Endothelial cell of umbilical vein (primary cell): ENCODE measurements at regions of chr3 and their contacts with region 1.

Region 1: DNA sequence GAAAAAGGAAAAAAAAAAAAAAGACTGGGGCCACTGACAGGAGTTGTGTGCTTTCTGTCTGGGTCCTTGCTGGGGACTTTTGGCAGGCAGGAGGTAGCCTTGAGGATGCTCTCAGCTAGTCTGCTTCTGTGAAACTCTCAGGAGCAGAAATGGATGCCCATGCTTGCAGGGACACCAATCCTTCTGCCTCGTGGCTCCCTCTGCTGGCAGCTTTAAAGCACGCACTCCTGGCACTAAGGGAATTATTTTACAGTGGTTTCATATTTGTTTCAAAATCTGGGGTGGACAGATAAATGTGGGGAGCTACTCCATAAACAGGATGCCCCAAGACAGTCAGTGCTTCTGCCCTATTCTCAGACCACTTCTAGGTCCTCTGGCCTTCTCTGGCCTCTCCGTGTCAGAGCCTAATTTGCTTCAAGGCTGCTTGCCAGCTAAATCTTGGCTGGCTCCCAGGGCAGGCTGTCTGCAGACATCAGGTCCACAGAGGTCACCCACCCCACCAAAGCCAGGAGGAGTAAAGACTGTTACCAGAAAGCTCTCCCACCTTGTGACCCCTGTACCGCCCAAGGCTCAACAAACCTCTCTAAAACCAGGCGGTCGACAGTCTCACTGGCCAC is 17.1 kb downstream of the TRAIP start:
- DNase-seq: peak; percentile 82
- H3K4me3 ChIP-seq: no peak overlapping the region
- H3K27ac ChIP-seq: no peak overlapping the region
- H3K4me1 ChIP-seq: peaks cover 15% of the 10 kb centered on the region
- H3K27me3 ChIP-seq: no peaks in the 10 kb centered on the region
- CTCF ChIP-seq: peak; percentile 82 to 93
- POLR2A ChIP-seq: no peak

Region 2: DNA sequence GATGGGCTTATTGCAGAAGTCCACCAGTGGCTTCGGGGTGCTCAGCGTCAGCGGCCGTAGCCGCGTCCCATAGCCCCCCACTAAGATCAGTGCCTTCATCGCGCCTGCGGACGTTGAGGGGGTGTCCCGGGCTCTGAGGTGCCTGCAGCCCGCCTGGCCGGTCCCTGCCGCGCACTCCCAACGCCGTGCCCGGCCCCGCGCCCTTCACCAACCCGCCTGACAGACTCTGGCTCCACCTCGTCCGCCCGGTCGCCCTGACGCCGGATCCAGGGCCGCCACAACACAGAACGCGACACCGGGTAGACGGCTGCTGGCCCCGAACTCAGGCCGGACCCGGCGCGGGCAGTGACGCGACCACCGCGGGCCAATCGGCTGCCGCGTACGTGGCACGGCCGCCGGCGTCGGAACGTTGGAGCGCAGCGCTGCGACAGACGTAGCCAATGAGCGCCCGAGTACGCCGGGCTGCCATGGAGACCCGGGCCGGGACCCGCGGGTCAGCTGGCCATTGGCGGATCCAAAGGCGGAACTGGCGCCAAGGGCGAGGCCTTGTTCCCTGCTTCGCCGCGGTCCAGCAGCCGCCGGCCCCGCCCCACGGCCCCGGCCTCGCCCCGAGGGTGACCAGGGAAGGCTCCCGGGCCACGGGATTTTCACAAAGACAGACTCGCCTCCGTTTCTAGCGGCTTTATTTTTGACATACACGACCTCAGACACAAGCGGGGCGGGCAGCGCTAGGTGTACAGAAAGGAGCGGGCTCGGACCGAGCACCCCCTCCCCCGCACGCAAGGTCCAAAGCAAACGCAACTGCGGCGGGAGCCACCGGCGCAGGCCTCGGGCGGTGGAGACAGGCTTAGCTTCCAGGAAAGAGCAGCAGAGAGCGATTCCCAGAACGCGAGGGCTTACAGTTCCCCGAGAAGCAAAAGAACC is 115.4 kb before region 1 on chr3 and contains the start of gene GMPPB:
- CTCF ChIA-PET with region 1: interaction called, 14 read pairs
- POLR2A ChIA-PET with region 1: no interaction called
- dilution Hi-C with region 1: no loop called
- intact Hi-C with region 1: loop called (anchors 1 kb)
- DNase-seq: peak; percentile 98
- H3K4me3 ChIP-seq: peak within 1 kb of the TSS; percentile 59 to 85 (median 81)
- H3K27ac ChIP-seq: peak within 1 kb of the TSS; percentile 84
- H3K4me1 ChIP-seq: peaks cover 16% of the 10 kb centered on the region
- H3K27me3 ChIP-seq: no peaks in the 10 kb centered on the region
- CTCF ChIP-seq: no peak
- POLR2A ChIP-seq: peak; percentile 80
- total RNA-seq, gene GMPPB: 52.5 and 54.5 TPM in 2 replicates

Region 3: DNA sequence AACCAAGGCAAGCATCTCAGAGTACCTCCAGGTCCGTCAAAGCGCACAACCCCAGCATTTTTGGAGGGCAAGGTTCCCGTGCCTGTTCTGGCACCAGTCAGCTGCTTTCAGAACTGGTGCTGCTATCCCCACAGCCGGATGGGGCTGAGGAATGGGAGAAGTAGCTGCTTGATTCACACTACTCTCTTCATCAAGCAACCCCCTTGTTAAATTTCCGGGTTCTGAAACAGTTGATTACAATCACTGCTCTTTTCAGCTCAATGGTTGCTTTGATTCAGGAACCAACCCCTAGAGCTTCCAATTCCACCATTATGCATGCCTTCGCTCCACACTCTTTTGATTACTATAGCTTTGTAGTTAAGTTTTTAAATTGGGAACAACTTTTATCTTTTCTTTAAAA is 13.3 kb before region 1 on chr3:
- CTCF ChIA-PET with region 1: interaction called, 14 read pairs
- POLR2A ChIA-PET with region 1: no interaction called
- dilution Hi-C with region 1: no loop called
- intact Hi-C with region 1: no loop called
- DNase-seq: no peak
- H3K4me3 ChIP-seq: no peak overlapping the region
- H3K27ac ChIP-seq: no peak overlapping the region
- H3K4me1 ChIP-seq: no peaks in the 10 kb centered on the region
- H3K27me3 ChIP-seq: no peaks in the 10 kb centered on the region
- CTCF ChIP-seq: no peak
- POLR2A ChIP-seq: no peak

Region 4: GRCh38 chr3:49906004-49906743 is 66.9 kb after region 1 on chr3:
- CTCF ChIA-PET with region 1: interaction called, 65 read pairs
- POLR2A ChIA-PET with region 1: no interaction called
- dilution Hi-C with region 1: no loop called
- intact Hi-C with region 1: loop called (anchors 1 kb)
- DNase-seq: peak; percentile 64
- H3K4me3 ChIP-seq: peak overlapping the region in 1 of 3 experiments; percentile 41
- H3K27ac ChIP-seq: no peak overlapping the region
- H3K4me1 ChIP-seq: peaks cover 14% of the 10 kb centered on the region
- H3K27me3 ChIP-seq: no peaks in the 10 kb centered on the region
- CTCF ChIP-seq: peak; percentile 63 to 80
- POLR2A ChIP-seq: no peak